T-cell (primary cell): ENCODE measurements at regions of chr7 and their contacts with region 1.

Region 1: DNA sequence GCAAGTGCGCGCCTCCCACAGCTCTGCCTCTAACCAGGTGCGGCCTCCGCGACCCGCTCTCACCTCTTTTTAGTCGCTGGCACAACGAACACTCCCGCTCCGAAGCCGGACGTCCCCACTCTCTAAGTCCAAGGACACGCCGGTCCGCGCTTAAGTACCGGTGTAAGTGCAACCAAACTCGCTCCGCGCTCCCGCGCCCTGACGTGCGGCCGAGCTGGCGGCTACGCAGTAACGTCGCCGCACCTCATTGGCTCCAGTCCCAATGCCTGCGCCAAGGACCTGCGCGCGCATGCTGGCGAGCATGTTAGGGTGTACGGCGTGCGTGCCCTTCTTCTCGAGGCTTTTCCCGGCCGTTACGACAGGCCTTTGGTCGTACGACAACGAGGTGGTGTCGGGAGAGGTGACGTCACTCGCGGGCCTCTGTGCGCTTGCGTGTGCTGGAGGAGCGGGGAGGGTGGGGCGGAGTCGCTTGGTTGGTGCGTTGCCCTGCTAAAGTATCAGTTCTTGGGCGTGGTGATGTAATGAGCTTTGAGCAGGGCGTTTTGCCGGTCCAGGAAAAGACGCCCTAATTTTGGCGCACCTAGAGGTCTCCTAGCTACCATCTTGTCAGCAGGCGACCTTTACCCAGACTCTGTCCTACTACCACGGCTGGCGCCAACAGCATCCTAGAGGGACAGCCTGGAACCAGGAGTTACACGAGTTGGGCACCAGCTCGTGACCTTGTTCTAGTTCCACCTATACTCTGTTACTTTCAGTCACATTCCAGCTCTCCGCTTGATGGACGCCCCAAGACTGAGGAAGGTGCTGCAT is at the start of gene CYCS:
- DNase-seq: peak; percentile 98 to 100 (median 99)
- ATAC-seq: peak; percentile 92 to 96 (median 94)
- H3K4me3 ChIP-seq: peak within 1 kb of the TSS; percentile 91 to 94
- H3K4me3 Mint-ChIP-seq: peak within 1 kb of the TSS; percentile 95 to 100 (median 96)
- H3K27ac ChIP-seq: peak within 1 kb of the TSS; percentile 97
- H3K27ac Mint-ChIP-seq: peak within 1 kb of the TSS; percentile 98 to 99
- H3K4me1 ChIP-seq: peaks cover 10 to 17% of the 10 kb centered on the region in 2 experiments
- H3K4me1 Mint-ChIP-seq: peaks cover 26 to 33% (median 30%) of the 10 kb centered on the region in 3 donors
- H3K27me3 ChIP-seq: no peaks in the 10 kb centered on the region
- H3K27me3 Mint-ChIP-seq: no peaks in the 10 kb centered on the region
- total RNA-seq, gene CYCS: 45.0 to 136 (median 47.3) TPM

Region 2: DNA sequence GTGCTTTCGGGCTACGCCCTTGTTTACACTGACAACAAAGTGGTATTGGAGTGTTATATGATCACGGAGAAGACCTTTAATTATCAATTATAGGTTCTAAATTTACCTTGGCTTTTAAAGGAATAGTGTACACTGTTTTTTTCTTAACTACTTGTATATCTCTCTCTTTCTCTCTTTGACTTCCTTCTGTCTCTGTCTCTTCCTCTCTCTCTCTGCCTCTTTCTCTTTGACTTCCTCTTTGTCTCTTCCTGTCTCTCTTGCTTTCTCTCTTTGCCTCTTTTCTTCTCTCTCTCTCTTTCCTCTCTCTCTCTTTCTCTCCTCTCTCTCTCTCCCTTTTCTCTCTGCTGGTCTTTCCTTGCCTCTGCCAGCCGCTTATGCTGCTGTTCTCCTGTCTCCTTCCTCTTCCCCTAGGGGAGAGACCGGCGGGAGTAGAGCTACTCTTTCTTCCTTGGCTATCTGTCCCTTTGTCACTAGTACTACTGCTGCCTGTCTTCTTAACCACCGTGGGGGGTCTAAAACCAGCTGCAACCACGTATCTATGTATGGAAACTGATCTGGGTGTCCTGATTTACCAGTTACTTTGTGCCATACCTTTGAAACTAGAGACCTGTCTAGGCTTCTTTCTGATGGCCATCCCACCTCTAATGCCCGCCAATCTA is 331.2 kb before region 1 on chr7:
- CTCF ChIA-PET with region 1: no interaction called
- POLR2A ChIA-PET with region 1: interaction called in 1 of 2 experiments, 10 read pairs
- DNase-seq: no peak
- ATAC-seq: no peak
- H3K4me3 ChIP-seq: no peak overlapping the region
- H3K4me3 Mint-ChIP-seq: no peak overlapping the region
- H3K27ac ChIP-seq: no peak overlapping the region
- H3K27ac Mint-ChIP-seq: peak overlapping the region; percentile 41 to 49
- H3K4me1 ChIP-seq: peaks cover 0 to 3% of the 10 kb centered on the region in 2 experiments
- H3K4me1 Mint-ChIP-seq: peaks cover 18 to 21% (median 20%) of the 10 kb centered on the region in 3 donors
- H3K27me3 ChIP-seq: no peaks in the 10 kb centered on the region
- H3K27me3 Mint-ChIP-seq: no peaks in the 10 kb centered on the region

Region 3: GRCh38 chr7:24819916-24820689 is 305.2 kb before region 1 on chr7:
- CTCF ChIA-PET with region 1: interaction called in 1 of 2 experiments, 16 read pairs
- POLR2A ChIA-PET with region 1: interaction called, 3 to 20 read pairs
- DNase-seq: peak; percentile 35 to 89 (median 59)
- ATAC-seq: peak; percentile 21 to 25 (median 22)
- H3K4me3 ChIP-seq: peak overlapping the region in 1 of 2 donors; percentile 5
- H3K4me3 Mint-ChIP-seq: peak overlapping the region; percentile 48 to 75 (median 72)
- H3K27ac ChIP-seq: peak overlapping the region; percentile 92
- H3K27ac Mint-ChIP-seq: peak overlapping the region; percentile 94 to 95
- H3K4me1 ChIP-seq: peaks cover 13 to 27% of the 10 kb centered on the region in 2 experiments
- H3K4me1 Mint-ChIP-seq: peaks cover 35 to 61% (median 41%) of the 10 kb centered on the region in 3 donors
- H3K27me3 ChIP-seq: no peaks in the 10 kb centered on the region
- H3K27me3 Mint-ChIP-seq: no peaks in the 10 kb centered on the region

Region 4: DNA sequence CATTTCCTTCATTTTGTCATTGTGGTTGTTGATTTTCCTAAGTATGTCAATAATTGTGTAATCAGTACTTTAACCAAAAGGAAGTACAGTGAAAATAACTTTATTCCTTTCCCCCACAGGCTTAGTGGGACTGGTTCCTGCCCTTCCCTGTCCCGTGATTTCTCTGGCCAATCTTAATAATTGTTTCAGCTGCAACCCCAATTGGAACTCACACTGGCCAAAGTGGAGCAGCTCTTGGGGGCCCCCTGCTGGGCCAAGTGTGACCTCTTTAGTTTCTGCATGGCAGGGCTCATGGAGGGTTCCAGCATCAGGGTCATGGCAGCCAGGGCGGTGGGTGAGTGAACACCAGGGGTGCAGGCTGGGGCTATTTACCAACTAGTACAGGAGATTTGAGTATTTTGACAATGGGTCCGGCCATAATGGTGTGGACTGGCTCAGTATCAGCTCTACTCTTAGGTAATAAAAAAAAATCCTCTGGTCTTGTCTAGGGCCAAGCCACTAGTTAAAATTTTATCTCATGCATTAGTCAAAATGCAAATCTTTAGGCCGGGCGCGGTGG is 32.0 kb before region 1 on chr7:
- CTCF ChIA-PET with region 1: interaction called, 4 to 17 read pairs
- POLR2A ChIA-PET with region 1: interaction called, 3 read pairs
- DNase-seq: peak; percentile 22 to 80 (median 68)
- ATAC-seq: peak; percentile 77 to 80 (median 78)
- H3K4me3 ChIP-seq: no peak overlapping the region
- H3K4me3 Mint-ChIP-seq: no peak overlapping the region
- H3K27ac ChIP-seq: no peak overlapping the region
- H3K27ac Mint-ChIP-seq: no peak overlapping the region
- H3K4me1 ChIP-seq: peaks cover 0 to 8% of the 10 kb centered on the region in 2 experiments
- H3K4me1 Mint-ChIP-seq: peaks cover 5 to 11% (median 5%) of the 10 kb centered on the region in 3 donors
- H3K27me3 ChIP-seq: no peaks in the 10 kb centered on the region
- H3K27me3 Mint-ChIP-seq: no peaks in the 10 kb centered on the region

Region 5: DNA sequence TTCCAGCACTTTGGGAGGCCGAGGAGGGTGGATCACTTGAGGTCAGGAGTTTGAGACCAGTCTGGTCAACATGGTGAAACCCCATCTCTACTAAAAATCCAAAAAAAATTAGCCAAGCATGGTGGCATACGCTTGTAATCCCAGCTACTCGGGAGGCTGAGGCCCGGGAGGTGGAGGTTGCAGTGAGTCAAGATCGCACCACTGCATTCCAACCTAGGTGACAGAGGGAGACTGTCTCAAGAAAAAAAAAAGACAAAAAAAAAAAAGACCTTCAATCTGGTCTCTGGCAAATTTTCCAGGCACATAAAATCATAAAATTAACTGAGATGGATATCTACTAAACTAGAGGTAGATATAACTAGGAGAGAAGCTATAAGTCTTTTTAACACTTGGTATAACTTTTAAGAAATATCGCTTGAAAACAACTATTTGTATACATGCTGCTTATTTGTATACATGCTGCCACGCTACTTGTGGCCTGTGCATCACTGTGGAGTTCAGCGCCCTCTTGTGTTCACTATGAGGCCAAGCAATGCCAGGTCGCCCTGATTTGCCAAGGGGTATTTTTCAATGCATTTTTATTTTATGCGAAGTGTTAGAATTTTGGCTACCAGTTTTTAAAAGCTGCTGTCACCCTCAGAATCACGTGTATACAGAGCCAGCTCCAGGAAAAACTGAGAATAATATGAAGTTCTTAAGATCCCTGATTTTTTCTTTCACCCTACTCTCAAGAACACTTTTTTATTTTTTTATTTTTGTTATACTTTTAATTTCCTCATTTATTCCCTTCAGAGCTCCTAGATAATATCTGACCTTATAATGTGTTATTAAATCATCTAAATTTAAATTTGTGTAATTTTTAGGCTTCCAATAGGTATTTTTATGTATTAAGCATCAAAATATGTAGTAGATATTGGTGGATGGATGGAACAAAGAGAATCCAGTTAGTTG is 27.0 kb before region 1 on chr7:
- CTCF ChIA-PET with region 1: interaction called, 4 to 17 read pairs
- POLR2A ChIA-PET with region 1: interaction called in 1 of 2 experiments, 3 read pairs
- DNase-seq: peak in 34 of 35 experiments; percentile 19 to 81 (median 46)
- ATAC-seq: peak; percentile 68 to 83 (median 72)
- H3K4me3 ChIP-seq: no peak overlapping the region
- H3K4me3 Mint-ChIP-seq: no peak overlapping the region
- H3K27ac ChIP-seq: no peak overlapping the region
- H3K27ac Mint-ChIP-seq: no peak overlapping the region
- H3K4me1 ChIP-seq: peaks cover 0 to 7% of the 10 kb centered on the region in 2 experiments
- H3K4me1 Mint-ChIP-seq: peaks cover 4 to 9% (median 5%) of the 10 kb centered on the region in 3 donors
- H3K27me3 ChIP-seq: no peaks in the 10 kb centered on the region
- H3K27me3 Mint-ChIP-seq: no peaks in the 10 kb centered on the region

Region 6: GRCh38 chr7:25143763-25144162 is 18.4 kb after region 1 on chr7:
- CTCF ChIA-PET with region 1: no interaction called
- POLR2A ChIA-PET with region 1: no interaction called
- DNase-seq: no peak
- ATAC-seq: no peak
- H3K4me3 ChIP-seq: no peak overlapping the region
- H3K4me3 Mint-ChIP-seq: no peak overlapping the region
- H3K27ac ChIP-seq: no peak overlapping the region
- H3K27ac Mint-ChIP-seq: no peak overlapping the region
- H3K4me1 ChIP-seq: no peaks in the 10 kb centered on the region
- H3K4me1 Mint-ChIP-seq: no peaks in the 10 kb centered on the region
- H3K27me3 ChIP-seq: no peaks in the 10 kb centered on the region
- H3K27me3 Mint-ChIP-seq: no peaks in the 10 kb centered on the region

Region 7: GRCh38 chr7:25179771-25180591 is 54.6 kb after region 1 on chr7:
- CTCF ChIA-PET with region 1: interaction called, 3 to 14 read pairs
- POLR2A ChIA-PET with region 1: interaction called, 4 to 15 read pairs
- DNase-seq: peak; percentile 79 to 97 (median 92)
- ATAC-seq: peak; percentile 92 to 98 (median 94)
- H3K4me3 ChIP-seq: peak overlapping the region; percentile 77 to 80
- H3K4me3 Mint-ChIP-seq: peak overlapping the region; percentile 75 to 88 (median 85)
- H3K27ac ChIP-seq: peak overlapping the region; percentile 86
- H3K27ac Mint-ChIP-seq: peak overlapping the region; percentile 88 to 93
- H3K4me1 ChIP-seq: peaks cover 0 to 16% of the 10 kb centered on the region in 2 experiments
- H3K4me1 Mint-ChIP-seq: peaks cover 20 to 23% (median 21%) of the 10 kb centered on the region in 3 donors
- H3K27me3 ChIP-seq: peaks cover 0 to 4% of the 10 kb centered on the region in 2 experiments
- H3K27me3 Mint-ChIP-seq: peaks cover 0 to 2% of the 10 kb centered on the region in 2 donors

Region 8: GRCh38 chr7:25537662-25538375 is 412.5 kb after region 1 on chr7:
- CTCF ChIA-PET with region 1: no interaction called
- POLR2A ChIA-PET with region 1: no interaction called
- DNase-seq: no peak
- ATAC-seq: no peak
- H3K4me3 ChIP-seq: no peak overlapping the region
- H3K4me3 Mint-ChIP-seq: no peak overlapping the region
- H3K27ac ChIP-seq: no peak overlapping the region
- H3K27ac Mint-ChIP-seq: no peak overlapping the region
- H3K4me1 ChIP-seq: no peaks in the 10 kb centered on the region
- H3K4me1 Mint-ChIP-seq: peaks cover 4 to 9% (median 9%) of the 10 kb centered on the region in 3 donors
- H3K27me3 ChIP-seq: peaks cover 0 to under 1% of the 10 kb centered on the region in 2 experiments
- H3K27me3 Mint-ChIP-seq: peaks cover 4 to 9% of the 10 kb centered on the region in 2 donors

Region 9: GRCh38 chr7:26760501-26760900 is 1635.2 kb after region 1 on chr7:
- CTCF ChIA-PET with region 1: no interaction called
- POLR2A ChIA-PET with region 1: no interaction called
- DNase-seq: no peak
- ATAC-seq: no peak
- H3K4me3 ChIP-seq: no peak overlapping the region
- H3K4me3 Mint-ChIP-seq: no peak overlapping the region
- H3K27ac ChIP-seq: no peak overlapping the region
- H3K27ac Mint-ChIP-seq: no peak overlapping the region
- H3K4me1 ChIP-seq: no peaks in the 10 kb centered on the region
- H3K4me1 Mint-ChIP-seq: no peaks in the 10 kb centered on the region
- H3K27me3 ChIP-seq: no peaks in the 10 kb centered on the region
- H3K27me3 Mint-ChIP-seq: peaks cover 0 to 4% of the 10 kb centered on the region in 2 donors